SK-MEL-5 (cell line): ENCODE measurements at regions of chr12 and their contacts with region 1.

Region 1: GRCh38 chr12:56189918-56190694 is 823 bp upstream of the SMARCC2 start:
- DNase-seq: peak; percentile 91

Region 2: GRCh38 chr12:55996715-55997534 is 193.2 kb before region 1 on chr12 and contains the start of gene SUOX:
- in situ Hi-C with region 1: no loop called
- DNase-seq: peak; percentile 97
- total RNA-seq, gene SUOX: 11.2 and 16.1 TPM in 2 replicates

Region 3: GRCh38 chr12:56117778-56118687 is 72.1 kb before region 1 on chr12 and contains the start of gene ZC3H10:
- in situ Hi-C with region 1: loop called (anchors 5 kb)
- DNase-seq: peak; percentile 99
- total RNA-seq, gene ZC3H10: 5.6 and 7.3 TPM in 2 replicates

Region 4: DNA sequence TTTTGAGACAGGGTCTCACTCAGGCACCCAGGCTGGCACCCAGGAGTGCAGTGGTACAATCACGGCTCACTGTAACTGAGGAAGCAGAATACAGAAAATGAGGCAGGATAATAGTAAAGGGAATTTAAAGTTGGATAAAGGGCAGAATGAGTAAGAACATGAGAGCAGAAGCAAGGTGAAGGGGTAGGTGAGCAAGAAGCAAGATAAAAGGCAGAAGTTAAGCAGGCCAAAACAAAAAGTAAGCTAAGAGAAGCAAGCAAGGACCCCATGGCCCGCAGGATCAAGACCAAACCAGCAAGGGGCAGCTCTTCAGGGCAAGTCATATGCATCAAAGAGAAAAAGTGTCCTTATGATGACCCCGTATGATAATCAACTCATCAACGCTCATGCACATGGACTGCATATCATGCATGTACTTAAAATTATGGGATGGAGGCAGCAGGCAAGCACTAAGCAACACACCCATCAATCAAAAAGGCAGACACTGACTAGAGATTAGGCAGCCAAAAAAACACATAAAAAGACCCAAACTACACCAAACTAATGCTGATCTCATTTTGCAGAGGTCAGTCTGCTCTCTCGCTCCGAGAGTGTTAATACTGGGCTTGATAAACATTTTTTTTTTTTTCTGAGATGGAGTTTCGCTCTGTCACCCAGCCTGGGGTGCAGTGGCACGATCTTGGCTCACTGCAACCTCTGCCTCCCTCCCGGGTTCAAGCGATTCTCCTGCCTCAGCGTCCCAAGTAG is 247.5 kb after region 1 on chr12:
- in situ Hi-C with region 1: no loop called
- DNase-seq: no peak